CD8-positive, alpha-beta T cell (primary cell): ENCODE measurements at regions of chr1 and their contacts with region 1.

Region 1: GRCh38 chr1:84181350-84182005 is 37.4 kb downstream of the PRKACB start:
- DNase-seq: no peak
- ATAC-seq: no peak
- H3K4me3 ChIP-seq: no peak overlapping the region
- H3K4me3 Mint-ChIP-seq: no peak overlapping the region
- H3K27ac ChIP-seq: no peak overlapping the region
- H3K27ac Mint-ChIP-seq: peak overlapping the region; percentile 20
- H3K4me1 ChIP-seq: peaks cover 7% of the 10 kb centered on the region
- H3K4me1 Mint-ChIP-seq: peaks cover 30% of the 10 kb centered on the region
- H3K27me3 ChIP-seq: no peaks in the 10 kb centered on the region
- H3K27me3 Mint-ChIP-seq: no peaks in the 10 kb centered on the region
- CTCF ChIP-seq: no peak

Region 2: DNA sequence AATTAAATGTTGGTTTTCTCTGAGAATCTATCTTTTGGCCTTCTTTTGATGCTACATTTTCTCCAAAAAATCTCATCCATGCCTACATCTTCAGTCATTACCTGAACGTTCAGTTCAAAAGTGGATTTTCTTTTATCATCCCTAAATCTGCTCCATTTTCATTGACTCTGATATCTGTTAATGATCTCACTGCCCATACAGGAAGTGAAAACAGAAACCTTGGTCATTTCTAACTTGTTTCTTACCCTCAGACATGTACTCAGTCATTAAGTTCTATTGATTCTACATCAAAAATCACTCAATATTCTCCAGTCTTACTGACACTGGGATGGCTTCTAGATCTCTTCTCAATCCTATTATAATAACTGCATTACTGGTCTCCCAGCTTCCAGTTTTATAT is 14.7 kb before region 1 on chr1:
- CTCF ChIA-PET with region 1: interaction called, 3 read pairs
- POLR2A ChIA-PET with region 1: interaction called, 3 read pairs
- intact Hi-C with region 1: loop called in 1 of 2 experiments (anchors 2 kb)
- DNase-seq: peak in 1 of 9 experiments; percentile 38
- ATAC-seq: no peak
- H3K4me3 ChIP-seq: no peak overlapping the region
- H3K4me3 Mint-ChIP-seq: peak overlapping the region; percentile 59
- H3K27ac ChIP-seq: peak overlapping the region in 1 of 2 experiments; percentile 65
- H3K27ac Mint-ChIP-seq: peak overlapping the region; percentile 56
- H3K4me1 ChIP-seq: peaks cover 63% of the 10 kb centered on the region
- H3K4me1 Mint-ChIP-seq: peaks cover 86% of the 10 kb centered on the region
- H3K27me3 ChIP-seq: no peaks in the 10 kb centered on the region
- H3K27me3 Mint-ChIP-seq: no peaks in the 10 kb centered on the region
- CTCF ChIP-seq: no peak

Region 3: GRCh38 chr1:84208935-84209334 is 27.5 kb after region 1 on chr1:
- CTCF ChIA-PET with region 1: no interaction called
- POLR2A ChIA-PET with region 1: no interaction called
- intact Hi-C with region 1: loop called in 1 of 2 experiments (anchors 2 kb)
- DNase-seq: no peak
- ATAC-seq: no peak
- H3K4me3 ChIP-seq: no peak overlapping the region
- H3K4me3 Mint-ChIP-seq: no peak overlapping the region
- H3K27ac ChIP-seq: no peak overlapping the region
- H3K27ac Mint-ChIP-seq: peak overlapping the region; percentile 46
- H3K4me1 ChIP-seq: peaks cover 12% of the 10 kb centered on the region
- H3K4me1 Mint-ChIP-seq: peaks cover 39% of the 10 kb centered on the region
- H3K27me3 ChIP-seq: no peaks in the 10 kb centered on the region
- H3K27me3 Mint-ChIP-seq: no peaks in the 10 kb centered on the region
- CTCF ChIP-seq: no peak

Region 4: DNA sequence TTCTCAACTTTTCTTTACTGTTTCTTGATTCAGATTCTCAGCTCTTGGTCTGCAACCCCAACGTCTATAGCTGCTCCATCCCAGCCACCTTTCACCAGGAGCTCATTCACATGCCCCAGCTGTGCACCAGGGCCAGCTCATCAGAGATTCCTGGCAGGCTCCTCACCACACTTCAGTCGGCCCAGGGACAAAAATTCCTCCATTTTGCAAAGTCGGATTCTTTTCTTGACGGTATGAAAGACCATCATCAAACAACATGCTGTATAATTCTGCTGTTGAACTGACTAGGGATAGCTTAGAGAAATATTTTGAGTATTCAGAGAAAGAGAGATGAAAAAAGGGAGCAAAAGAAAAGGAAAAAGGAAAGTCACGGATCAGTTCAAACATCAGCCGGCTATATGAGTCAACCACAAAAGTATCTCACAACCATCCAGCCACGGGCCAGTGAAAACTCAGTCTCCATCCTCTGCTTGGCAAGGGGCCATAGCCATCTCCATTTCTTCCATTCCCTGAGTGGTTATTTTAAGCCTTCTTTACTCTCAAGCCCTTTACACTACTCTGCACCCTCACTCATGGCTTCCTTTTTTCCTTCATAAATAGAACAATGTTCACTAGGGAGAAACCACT is 231.0 kb after region 1 on chr1:
- CTCF ChIA-PET with region 1: no interaction called
- POLR2A ChIA-PET with region 1: no interaction called
- intact Hi-C with region 1: no loop called
- DNase-seq: no peak
- ATAC-seq: no peak
- H3K4me3 ChIP-seq: no peak overlapping the region
- H3K4me3 Mint-ChIP-seq: no peak overlapping the region
- H3K27ac ChIP-seq: no peak overlapping the region
- H3K27ac Mint-ChIP-seq: no peak overlapping the region
- H3K4me1 ChIP-seq: no peaks in the 10 kb centered on the region
- H3K4me1 Mint-ChIP-seq: no peaks in the 10 kb centered on the region
- H3K27me3 ChIP-seq: no peaks in the 10 kb centered on the region
- H3K27me3 Mint-ChIP-seq: peaks cover under 1% of the 10 kb centered on the region
- CTCF ChIP-seq: no peak